A673 (cell line): ENCODE measurements at regions of chr21 and their contacts with region 1.

Region 1: GRCh38 chr21:30044445-30045064 is 104.8 kb upstream of the GRIK1 start:
- DNase-seq: peak; percentile 45
- H3K4me3 ChIP-seq: no peak overlapping the region
- H3K27ac ChIP-seq: no peak overlapping the region
- H3K4me1 ChIP-seq: no peaks in the 10 kb centered on the region
- H3K27me3 ChIP-seq: no peaks in the 10 kb centered on the region
- CTCF ChIP-seq: peak; percentile 93

Region 2: DNA sequence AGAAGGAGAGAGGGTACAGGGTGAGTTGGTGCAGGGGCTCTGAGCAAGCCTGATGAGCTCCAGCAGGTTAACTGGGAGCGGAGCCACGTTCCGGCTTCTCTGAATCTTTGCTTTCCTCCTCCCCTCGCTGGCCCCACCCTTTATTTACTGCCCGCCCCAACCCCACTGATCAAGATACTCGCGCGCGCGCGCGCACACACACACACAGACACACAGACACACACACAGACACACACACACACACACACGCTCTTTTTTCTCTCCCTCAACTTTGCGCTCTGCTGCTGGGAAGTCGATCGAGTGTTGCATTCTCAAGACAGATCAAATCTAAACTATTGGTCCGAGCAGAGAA is 104.7 kb before region 1 on chr21 and contains the start of gene GRIK1:
- CTCF ChIA-PET with region 1: interaction called, 3 read pairs
- POLR2A ChIA-PET with region 1: no interaction called
- intact Hi-C with region 1: loop called (anchors 5 kb)
- DNase-seq: peak; percentile 60
- H3K4me3 ChIP-seq: peak within 1 kb of the TSS; percentile 48
- H3K27ac ChIP-seq: no peak within 1 kb of the TSS
- H3K4me1 ChIP-seq: peaks cover 5% of the 10 kb centered on the region
- H3K27me3 ChIP-seq: peaks cover 53% of the 10 kb centered on the region
- CTCF ChIP-seq: no peak
- total RNA-seq, gene GRIK1: 0.67 and 0.85 TPM in 2 replicates

Region 3: DNA sequence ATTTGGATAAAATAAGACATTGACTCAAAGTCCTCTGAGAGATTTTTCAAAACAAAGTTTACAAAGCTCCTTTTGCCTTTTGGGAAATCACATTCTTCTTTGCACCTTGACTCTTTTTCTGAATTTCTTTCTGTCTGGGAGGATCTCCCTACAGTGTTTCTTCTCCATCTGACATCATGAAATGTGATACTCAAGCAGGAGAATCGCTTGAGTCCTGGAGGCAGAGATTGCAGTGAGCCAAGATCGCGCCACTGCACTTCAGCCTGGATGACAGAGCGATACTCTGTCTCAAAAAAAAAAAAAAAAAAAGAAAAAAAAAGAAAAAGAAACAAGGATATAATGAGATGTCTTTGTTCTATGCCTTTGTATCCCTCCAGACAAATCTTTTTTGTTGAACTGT is 91.5 kb before region 1 on chr21:
- CTCF ChIA-PET with region 1: no interaction called
- POLR2A ChIA-PET with region 1: no interaction called
- intact Hi-C with region 1: no loop called
- DNase-seq: no peak
- H3K4me3 ChIP-seq: no peak overlapping the region
- H3K27ac ChIP-seq: no peak overlapping the region
- H3K4me1 ChIP-seq: no peaks in the 10 kb centered on the region
- H3K27me3 ChIP-seq: peaks cover 16% of the 10 kb centered on the region
- CTCF ChIP-seq: no peak

Region 4: GRCh38 chr21:31088315-31088714 is 1043.8 kb after region 1 on chr21:
- CTCF ChIA-PET with region 1: interaction called, 3 read pairs
- POLR2A ChIA-PET with region 1: no interaction called
- intact Hi-C with region 1: loop called (anchors 10 kb)
- DNase-seq: no peak
- H3K4me3 ChIP-seq: no peak overlapping the region
- H3K27ac ChIP-seq: no peak overlapping the region
- H3K4me1 ChIP-seq: no peaks in the 10 kb centered on the region
- H3K27me3 ChIP-seq: peaks cover 6% of the 10 kb centered on the region
- CTCF ChIP-seq: 0 out of 2 replicates have a peak, but pooled peaks have one; percentile 11